Activated CD4-positive, alpha-beta T cell treated with anti-CD3 and anti-CD28 coated beads, Interleukin-2, amount 10 ng/mL, durations not matched to agents 24 days and 14 days (primary cell): ENCODE measurements at regions of chr9 and their contacts with region 1.

Region 1: DNA sequence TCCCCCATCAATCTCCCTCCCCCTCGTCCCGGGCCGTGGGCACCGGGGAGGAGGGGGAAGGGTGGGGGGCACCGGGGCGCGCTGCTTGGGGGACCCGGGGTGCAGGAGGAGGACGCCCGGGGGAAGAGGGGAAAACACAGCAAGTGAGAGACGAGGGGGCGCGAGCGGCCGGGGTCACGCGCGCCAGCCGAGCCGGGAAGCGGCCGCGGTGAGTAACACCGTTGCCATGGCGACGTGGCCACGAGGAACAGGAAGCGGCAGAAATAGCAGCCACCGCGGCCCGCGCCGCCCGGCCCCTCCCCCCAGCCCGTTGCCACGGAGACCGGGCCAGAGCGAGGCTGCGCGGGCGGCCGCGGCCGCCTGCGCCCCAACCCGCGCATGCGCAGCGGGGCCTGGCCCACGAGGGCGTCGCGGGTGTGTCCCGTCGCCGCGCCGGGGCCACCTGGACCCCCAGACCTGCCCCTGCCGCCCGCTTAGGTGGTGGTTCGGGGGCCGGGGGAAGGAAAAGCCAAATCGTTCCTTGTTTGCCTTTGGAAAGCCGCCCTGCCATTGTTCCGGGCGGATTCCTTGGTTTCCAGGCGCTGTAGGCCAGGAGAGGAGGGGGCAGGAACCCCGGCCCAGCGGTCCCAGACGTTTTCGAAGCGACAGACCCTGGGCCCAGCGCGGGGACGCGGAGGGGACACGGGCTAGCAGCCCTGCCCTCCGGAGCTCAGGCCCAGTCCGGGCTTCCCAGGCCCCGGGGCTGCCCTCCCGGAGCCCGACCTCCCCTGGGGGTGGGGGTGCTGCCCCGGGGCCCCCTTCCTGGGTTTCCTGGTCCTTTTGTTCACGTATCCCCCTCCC is 207.1 kb downstream of the C9orf50 start:
- DNase-seq: peak; percentile 99
- H3K4me3 Mint-ChIP-seq: peak overlapping the region; percentile 86
- H3K27ac Mint-ChIP-seq: peak overlapping the region; percentile 98
- H3K4me1 Mint-ChIP-seq: peaks cover 19% of the 10 kb centered on the region
- H3K27me3 Mint-ChIP-seq: no peaks in the 10 kb centered on the region

Region 2: GRCh38 chr9:129320575-129321263 is 93.0 kb before region 1 on chr9:
- intact Hi-C with region 1: loop called (anchors 5 kb)
- DNase-seq: peak; percentile 87
- H3K4me3 Mint-ChIP-seq: peak overlapping the region; percentile 81
- H3K27ac Mint-ChIP-seq: peak overlapping the region; percentile 89
- H3K4me1 Mint-ChIP-seq: peaks cover 15% of the 10 kb centered on the region
- H3K27me3 Mint-ChIP-seq: peaks cover 1% of the 10 kb centered on the region

Region 3: DNA sequence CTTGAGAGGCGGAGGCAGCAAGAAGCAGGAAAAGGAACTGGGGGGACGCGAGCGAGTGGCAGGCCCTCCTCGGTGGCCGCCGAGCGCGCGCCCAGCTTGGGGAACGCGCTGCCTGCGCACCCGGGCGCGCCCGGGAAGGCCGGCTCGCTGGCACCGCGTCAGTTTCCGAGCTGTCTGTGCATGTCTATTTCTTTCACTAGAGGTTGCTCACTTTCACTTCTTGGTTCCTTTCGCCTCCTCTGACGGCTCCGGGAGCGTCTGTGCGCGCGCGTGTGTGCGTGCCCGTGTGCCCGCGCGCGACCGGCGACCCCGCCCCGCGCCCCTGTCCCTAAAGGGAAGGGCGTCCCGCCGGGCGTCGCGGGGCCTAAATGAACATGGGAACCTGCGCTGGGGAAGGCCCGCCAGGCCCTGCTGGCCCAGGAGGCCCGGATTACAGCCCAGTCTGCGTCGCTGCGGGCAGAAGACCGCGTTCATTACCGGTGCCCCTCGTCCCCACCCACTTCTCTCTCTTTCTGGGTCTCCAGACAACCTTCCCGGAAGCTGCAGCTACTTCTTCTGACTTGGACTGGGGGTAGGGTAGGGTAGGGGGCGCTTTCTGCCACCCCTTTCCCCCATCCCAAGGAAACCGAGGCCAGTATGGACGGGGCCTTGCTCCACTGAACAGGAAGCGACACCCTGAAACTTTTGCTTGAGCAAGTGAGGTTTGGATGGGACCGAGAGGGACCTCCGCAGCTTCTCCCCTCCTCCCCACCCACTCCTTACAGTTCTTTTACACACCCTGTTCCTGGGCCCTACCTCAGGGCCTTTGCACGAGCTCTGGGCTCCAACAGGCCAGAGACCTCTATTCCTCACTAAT is 30.0 kb before region 1 on chr9:
- intact Hi-C with region 1: loop called (anchors 2 kb)
- DNase-seq: peak; percentile 92
- H3K4me3 Mint-ChIP-seq: peak overlapping the region; percentile 68
- H3K27ac Mint-ChIP-seq: peak overlapping the region; percentile 47
- H3K4me1 Mint-ChIP-seq: peaks cover 4% of the 10 kb centered on the region
- H3K27me3 Mint-ChIP-seq: peaks cover 7% of the 10 kb centered on the region

Region 4: GRCh38 chr9:129460323-129461261 is 46.8 kb after region 1 on chr9:
- intact Hi-C with region 1: loop called (anchors 1 kb)
- DNase-seq: peak; percentile 96
- H3K4me3 Mint-ChIP-seq: peak overlapping the region; percentile 83
- H3K27ac Mint-ChIP-seq: peak overlapping the region; percentile 93
- H3K4me1 Mint-ChIP-seq: peaks cover 39% of the 10 kb centered on the region
- H3K27me3 Mint-ChIP-seq: no peaks in the 10 kb centered on the region

Region 5: GRCh38 chr9:129487642-129488409 is 74.1 kb after region 1 on chr9:
- intact Hi-C with region 1: loop called (anchors 1 kb)
- DNase-seq: peak; percentile 79
- H3K4me3 Mint-ChIP-seq: peak overlapping the region; percentile 92
- H3K27ac Mint-ChIP-seq: peak overlapping the region; percentile 96
- H3K4me1 Mint-ChIP-seq: peaks cover 61% of the 10 kb centered on the region
- H3K27me3 Mint-ChIP-seq: no peaks in the 10 kb centered on the region

Region 6: GRCh38 chr9:129626079-129626624 is 212.4 kb after region 1 on chr9 and contains the start of gene NTMT1:
- intact Hi-C with region 1: loop called (anchors 1 kb)
- DNase-seq: peak; percentile 97
- H3K4me3 Mint-ChIP-seq: peak within 1 kb of the TSS; percentile 83
- H3K27ac Mint-ChIP-seq: peak within 1 kb of the TSS; percentile 93
- H3K4me1 Mint-ChIP-seq: peaks cover 33% of the 10 kb centered on the region
- H3K27me3 Mint-ChIP-seq: peaks cover 8% of the 10 kb centered on the region
- total RNA-seq, gene NTMT1: 72.0 and 72.4 TPM in 2 replicates